Mammary epithelial cell (primary cell): ENCODE measurements at regions of chr1 and their contacts with region 1.

Region 1: DNA sequence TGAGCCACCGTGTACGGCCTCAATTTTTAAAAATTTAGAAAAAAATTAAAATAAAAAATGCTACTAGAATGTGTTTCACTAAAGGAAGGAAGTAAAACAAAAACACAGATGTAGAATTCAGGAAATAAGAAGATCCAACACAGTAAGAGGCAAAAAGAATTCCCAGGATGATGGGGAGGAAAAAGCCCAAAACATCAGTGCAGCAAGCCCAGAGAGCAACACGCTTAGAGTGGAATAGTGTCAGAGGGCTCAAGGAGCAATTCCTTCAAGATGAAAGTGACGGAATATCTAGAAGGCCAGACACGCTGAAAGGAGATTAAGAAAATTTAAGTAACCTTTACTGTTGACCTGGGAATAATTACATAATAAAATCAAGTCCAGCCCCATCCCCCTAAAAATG is 80.4 kb downstream of the DAP3 start:
- DNase-seq: no peak
- H3K4me3 ChIP-seq: no peak overlapping the region
- H3K27ac ChIP-seq: no peak overlapping the region
- H3K4me1 ChIP-seq: no peaks in the 10 kb centered on the region
- H3K27me3 ChIP-seq: no peaks in the 10 kb centered on the region
- CTCF ChIP-seq: no peak

Region 2: DNA sequence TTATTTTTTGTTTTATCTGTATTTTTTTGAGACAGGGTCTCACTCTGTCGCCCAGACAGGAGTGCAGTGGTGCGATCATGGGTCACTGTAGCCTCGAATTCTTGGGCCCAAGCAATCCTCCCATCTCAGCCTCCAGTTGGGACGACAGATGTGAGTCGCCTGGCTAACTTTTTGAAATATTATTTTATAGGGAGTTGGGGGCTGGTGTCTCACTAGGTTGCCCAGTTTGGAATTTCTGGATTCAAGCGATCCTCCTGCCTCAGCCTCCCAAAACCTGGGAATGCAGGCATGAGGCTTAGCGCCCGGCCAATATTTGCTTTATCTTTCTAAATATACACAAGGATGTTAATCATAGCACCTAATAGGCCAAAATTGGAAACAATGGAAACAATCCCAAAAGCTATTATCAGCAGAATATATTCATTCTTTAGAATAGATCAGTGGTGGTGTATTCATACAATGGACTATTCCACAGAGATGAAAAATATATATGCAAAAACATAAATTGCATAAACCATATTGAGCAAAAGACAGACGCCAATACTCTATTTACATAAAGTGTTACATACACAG is 24.5 kb before region 1 on chr1:
- CTCF ChIA-PET with region 1: no interaction called
- dilution Hi-C with region 1: no loop called
- in situ Hi-C with region 1: no loop called
- intact Hi-C with region 1: no loop called
- DNase-seq: no peak
- H3K4me3 ChIP-seq: peak overlapping the region; percentile 72 to 94 (median 75)
- H3K27ac ChIP-seq: peak overlapping the region; percentile 55
- H3K4me1 ChIP-seq: no peaks in the 10 kb centered on the region
- H3K27me3 ChIP-seq: no peaks in the 10 kb centered on the region
- CTCF ChIP-seq: no peak

Region 3: GRCh38 chr1:155816351-155816750 is 47.1 kb after region 1 on chr1:
- CTCF ChIA-PET with region 1: no interaction called
- dilution Hi-C with region 1: loop called (anchors 5 kb)
- in situ Hi-C with region 1: no loop called
- intact Hi-C with region 1: no loop called
- DNase-seq: no peak
- H3K4me3 ChIP-seq: no peak overlapping the region
- H3K27ac ChIP-seq: no peak overlapping the region
- H3K4me1 ChIP-seq: no peaks in the 10 kb centered on the region
- H3K27me3 ChIP-seq: no peaks in the 10 kb centered on the region
- CTCF ChIP-seq: no peak